ENCODE measurements at regions of chr14 and their contacts with region 1.

Region 1: DNA sequence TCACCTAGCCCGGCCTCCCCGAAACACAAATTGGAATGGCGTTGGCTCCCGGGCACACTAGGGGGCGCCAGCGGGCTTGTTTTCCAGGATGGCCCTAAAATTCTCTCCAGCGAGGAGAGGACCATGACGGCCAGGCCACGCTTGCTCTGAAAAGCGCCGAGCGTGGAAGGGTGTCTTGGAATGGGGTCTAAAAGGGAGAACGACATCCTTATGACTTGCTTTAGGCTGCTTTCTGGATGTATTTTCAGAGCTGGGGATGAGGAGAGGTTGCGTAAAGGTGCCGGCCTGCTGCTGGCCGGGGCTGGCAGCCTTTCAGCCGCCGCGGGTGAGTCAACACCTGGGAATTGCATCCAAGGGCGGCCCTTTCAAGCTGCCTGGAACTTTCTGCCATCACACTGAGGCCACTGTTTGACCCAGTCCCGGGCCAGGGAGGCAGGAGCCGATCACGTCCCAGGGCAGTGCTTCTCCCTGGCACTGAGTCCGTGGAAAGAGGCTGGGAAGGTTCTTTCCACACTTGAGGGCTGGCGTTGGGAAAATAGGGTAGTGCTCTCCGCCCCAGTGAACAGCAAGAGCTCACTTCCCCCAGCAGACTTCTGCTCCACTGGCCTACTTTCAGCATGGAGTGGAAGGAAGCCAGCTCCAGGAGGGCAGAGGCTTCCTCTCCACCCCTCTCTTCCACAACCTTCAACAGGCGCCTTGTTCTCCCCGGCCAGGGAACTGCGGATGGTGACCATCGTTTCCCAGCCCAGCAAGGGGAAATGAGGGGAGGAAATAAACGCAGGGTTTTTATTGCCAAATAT is 216.2 kb downstream of the TTC8 start:
- DNase-seq: peak; percentile 86
- H3K4me3 ChIP-seq: peak overlapping the region; percentile 12 to 23
- H3K27ac ChIP-seq: peak overlapping the region; percentile 77 to 80
- H3K4me1 ChIP-seq: peaks cover 2% of the 10 kb centered on the region
- H3K27me3 ChIP-seq: no peaks in the 10 kb centered on the region
- CTCF ChIP-seq: peak; percentile 89 to 95 (median 92)
- POLR2A ChIP-seq: no peak

Region 2: DNA sequence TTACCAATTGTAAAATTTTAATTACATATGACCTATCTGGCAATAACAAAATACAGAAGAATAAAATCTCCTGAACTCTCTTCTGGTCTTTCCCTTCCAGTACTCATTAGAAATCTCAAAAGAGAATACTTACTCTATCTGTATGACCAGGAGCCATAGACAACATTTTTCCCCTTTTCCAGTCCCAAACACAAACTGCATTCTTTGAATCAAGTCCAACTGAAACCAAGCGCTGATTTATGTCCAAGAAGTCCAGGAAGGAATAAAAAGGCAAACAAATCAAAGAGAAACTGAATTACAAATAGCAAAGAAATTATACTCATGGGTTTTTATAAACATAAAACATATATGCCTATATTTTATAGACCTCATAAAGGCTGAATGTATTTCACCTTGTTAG is 294.6 kb before region 1 on chr14:
- intact Hi-C with region 1: no loop called
- DNase-seq: no peak
- H3K4me3 ChIP-seq: no peak overlapping the region
- H3K27ac ChIP-seq: no peak overlapping the region
- H3K4me1 ChIP-seq: no peaks in the 10 kb centered on the region
- H3K27me3 ChIP-seq: no peaks in the 10 kb centered on the region
- CTCF ChIP-seq: no peak
- POLR2A ChIP-seq: no peak

Region 3: GRCh38 chr14:88961214-88961613 is 79.4 kb before region 1 on chr14:
- intact Hi-C with region 1: no loop called
- DNase-seq: no peak
- H3K4me3 ChIP-seq: no peak overlapping the region
- H3K27ac ChIP-seq: no peak overlapping the region
- H3K4me1 ChIP-seq: no peaks in the 10 kb centered on the region
- H3K27me3 ChIP-seq: no peaks in the 10 kb centered on the region
- CTCF ChIP-seq: no peak
- POLR2A ChIP-seq: no peak

Region 4: DNA sequence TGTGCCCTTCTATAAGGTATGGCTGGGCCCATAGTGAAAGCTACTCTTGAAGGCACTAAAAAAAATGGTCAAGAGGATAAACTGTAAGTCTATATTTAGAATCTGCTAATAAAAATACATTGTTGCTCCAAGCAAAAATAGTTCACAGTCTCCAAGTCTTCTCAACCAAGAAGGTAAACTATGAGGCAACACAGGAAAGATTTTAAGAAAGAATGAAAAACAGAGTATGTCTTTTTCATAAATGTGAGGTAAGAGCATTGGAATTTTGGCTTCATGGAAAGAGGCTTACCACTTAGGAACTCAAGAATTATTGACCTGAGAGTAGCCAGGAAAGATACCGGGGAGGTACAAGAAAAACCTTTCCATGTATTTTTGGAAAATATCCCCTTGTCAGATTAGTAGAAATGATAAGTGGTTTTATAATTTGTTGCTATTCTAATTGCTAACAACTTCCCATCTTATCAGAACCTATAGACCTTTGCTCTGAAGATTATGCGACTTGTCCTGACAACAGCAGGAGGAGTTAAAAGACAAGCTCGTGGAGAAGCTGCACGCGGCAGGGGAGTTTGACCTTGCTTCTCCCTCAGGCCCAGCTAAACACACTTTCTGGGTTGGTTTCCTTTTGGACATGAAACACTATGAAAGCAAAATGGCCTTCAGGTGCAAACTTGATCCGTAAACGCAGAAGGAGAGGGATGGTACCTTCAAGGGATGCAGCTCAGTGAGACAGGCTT is 138.3 kb after region 1 on chr14:
- intact Hi-C with region 1: loop called (anchors 10 kb)
- DNase-seq: no peak
- H3K4me3 ChIP-seq: no peak overlapping the region
- H3K27ac ChIP-seq: no peak overlapping the region
- H3K4me1 ChIP-seq: no peaks in the 10 kb centered on the region
- H3K27me3 ChIP-seq: no peaks in the 10 kb centered on the region
- CTCF ChIP-seq: no peak
- POLR2A ChIP-seq: no peak

Region 5: GRCh38 chr14:89232265-89233070 is 191.8 kb after region 1 on chr14:
- intact Hi-C with region 1: loop called (anchors 5 kb)
- DNase-seq: no peak
- H3K4me3 ChIP-seq: no peak overlapping the region
- H3K27ac ChIP-seq: no peak overlapping the region
- H3K4me1 ChIP-seq: no peaks in the 10 kb centered on the region
- H3K27me3 ChIP-seq: no peaks in the 10 kb centered on the region
- CTCF ChIP-seq: no peak
- POLR2A ChIP-seq: no peak

Region 6: DNA sequence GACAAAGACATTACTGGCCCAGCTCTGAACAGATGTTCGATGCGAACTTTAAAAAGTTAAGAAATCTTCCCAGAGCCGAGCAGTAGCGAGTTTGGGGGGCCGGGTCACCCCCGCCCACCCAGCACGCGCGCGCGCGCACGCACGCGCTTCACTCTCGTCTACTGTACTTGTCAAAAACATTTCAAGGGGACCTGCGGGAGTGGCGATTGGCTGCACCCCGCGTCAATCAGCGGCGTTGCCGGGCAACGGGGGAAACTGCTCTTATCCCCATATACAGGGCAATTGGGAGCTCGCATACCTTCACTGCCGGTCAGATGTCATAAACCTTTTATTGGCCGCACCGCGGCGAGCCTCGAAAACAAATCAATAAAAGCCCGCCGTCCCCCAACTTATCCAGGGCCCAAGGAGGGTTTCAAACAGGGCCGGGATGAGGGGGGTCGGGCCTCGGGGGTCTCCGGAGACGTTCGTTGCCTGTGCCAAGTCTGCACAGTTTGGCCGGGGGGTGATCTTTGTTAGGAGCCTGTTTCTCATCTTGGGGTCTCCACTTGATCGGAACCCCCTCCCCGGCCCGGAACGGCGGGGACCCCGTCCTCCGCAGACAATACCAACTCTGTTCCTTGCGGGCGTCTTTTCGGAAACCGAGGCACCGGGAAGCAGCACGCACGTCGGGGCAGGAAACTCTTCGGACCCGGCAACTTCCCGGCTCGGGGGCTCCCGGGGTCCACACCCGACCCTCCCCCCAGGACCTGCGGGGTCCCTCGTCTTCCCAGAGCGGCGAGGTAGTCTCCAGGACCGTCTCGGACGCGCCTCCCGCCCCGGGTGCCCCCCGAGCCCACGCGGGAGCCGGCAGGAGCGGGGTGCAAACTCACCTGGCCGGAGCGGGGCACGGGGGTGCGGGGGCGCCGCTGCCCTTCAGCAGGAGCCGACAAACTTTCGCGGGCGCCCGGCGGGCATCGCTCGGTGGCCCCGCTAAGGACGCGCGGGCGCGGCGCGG is 375.6 kb after region 1 on chr14:
- intact Hi-C with region 1: loop called (anchors 2 kb)
- DNase-seq: peak; percentile 99
- H3K4me3 ChIP-seq: peak overlapping the region; percentile 91 to 92
- H3K27ac ChIP-seq: peak overlapping the region; percentile 94 to 95
- H3K4me1 ChIP-seq: peaks cover 8% of the 10 kb centered on the region
- H3K27me3 ChIP-seq: no peaks in the 10 kb centered on the region
- CTCF ChIP-seq: no peak
- POLR2A ChIP-seq: peak; percentile 66

Measured in prostate gland (tissue), 2 donors.